Adrenal gland (tissue), 19 donors: ENCODE measurements at regions of chr5 and their contacts with region 1.

Region 1: GRCh38 chr5:111530298-111530740 is 18.0 kb upstream of the STARD4 start:
- DNase-seq: peak; percentile 37 to 86 (median 70)
- H3K4me3 ChIP-seq: no peak overlapping the region
- H3K27ac ChIP-seq: peak overlapping the region in 2 of 5 donors; percentile 28 to 45
- H3K4me1 ChIP-seq: no peaks in the 10 kb centered on the region
- H3K27me3 ChIP-seq: no peaks in the 10 kb centered on the region
- CTCF ChIP-seq: no peak
- POLR2A ChIP-seq: no peak

Region 2: GRCh38 chr5:111853748-111854147 is 323.4 kb after region 1 on chr5:
- intact Hi-C with region 1: no loop called
- DNase-seq: no peak
- H3K4me3 ChIP-seq: no peak overlapping the region
- H3K27ac ChIP-seq: no peak overlapping the region
- H3K4me1 ChIP-seq: no peaks in the 10 kb centered on the region
- H3K27me3 ChIP-seq: no peaks in the 10 kb centered on the region
- CTCF ChIP-seq: no peak
- POLR2A ChIP-seq: no peak

Region 3: GRCh38 chr5:112146323-112147226 is 616.3 kb after region 1 on chr5:
- intact Hi-C with region 1: loop called (anchors 5 to 10 kb)
- DNase-seq: peak; percentile 51 to 84 (median 65)
- H3K4me3 ChIP-seq: no peak overlapping the region
- H3K27ac ChIP-seq: no peak overlapping the region
- H3K4me1 ChIP-seq: peaks cover 6 to 10% of the 10 kb centered on the region in 2 donors
- H3K27me3 ChIP-seq: no peaks in the 10 kb centered on the region
- CTCF ChIP-seq: peak; percentile 78 to 96 (median 91)
- POLR2A ChIP-seq: no peak

Region 4: GRCh38 chr5:112154940-112155686 is 624.8 kb after region 1 on chr5:
- intact Hi-C with region 1: loop called in 1 of 2 experiments (anchors 10 kb)
- DNase-seq: no peak
- H3K4me3 ChIP-seq: no peak overlapping the region
- H3K27ac ChIP-seq: no peak overlapping the region
- H3K4me1 ChIP-seq: peaks cover 0 to under 1% of the 10 kb centered on the region in 2 donors
- H3K27me3 ChIP-seq: no peaks in the 10 kb centered on the region
- CTCF ChIP-seq: no peak
- POLR2A ChIP-seq: no peak